Naive thymus-derived CD4-positive, alpha-beta T cell (primary cell): ENCODE measurements at regions of chr14 and their contacts with region 1.

Region 1: GRCh38 chr14:76947078-76947837 is 81.2 kb downstream of the IRF2BPL start:
- DNase-seq: peak; percentile 53 to 76 (median 68)
- ATAC-seq: peak; percentile 96
- H3K4me3 ChIP-seq: no peak overlapping the region
- H3K4me3 Mint-ChIP-seq: peak overlapping the region in 9 of 10 donors; percentile 20 to 65 (median 50)
- H3K27ac ChIP-seq: peak overlapping the region; percentile 20
- H3K27ac Mint-ChIP-seq: peak overlapping the region in 7 of 9 donors; percentile 28 to 83 (median 63)
- H3K4me1 ChIP-seq: peaks cover 6 to 16% of the 10 kb centered on the region in 2 donors
- H3K4me1 Mint-ChIP-seq: peaks cover 20 to 56% (median 35%) of the 10 kb centered on the region in 7 donors
- H3K27me3 ChIP-seq: no peaks in the 10 kb centered on the region
- H3K27me3 Mint-ChIP-seq: no peaks in the 10 kb centered on the region

Region 2: GRCh38 chr14:77033622-77034521 is 86.6 kb after region 1 on chr14:
- CTCF ChIA-PET with region 1: interaction called, 14 read pairs
- POLR2A ChIA-PET with region 1: interaction called, 76 read pairs
- intact Hi-C with region 1: no loop called
- DNase-seq: peak in 7 of 9 donors; percentile 32 to 89 (median 47)
- ATAC-seq: peak; percentile 76
- H3K4me3 ChIP-seq: peak overlapping the region; percentile 79
- H3K4me3 Mint-ChIP-seq: peak overlapping the region; percentile 81 to 93 (median 90)
- H3K27ac ChIP-seq: peak overlapping the region; percentile 95
- H3K27ac Mint-ChIP-seq: peak overlapping the region; percentile 92 to 98 (median 94)
- H3K4me1 ChIP-seq: peaks cover 37 to 67% of the 10 kb centered on the region in 2 donors
- H3K4me1 Mint-ChIP-seq: peaks cover 45 to 85% (median 78%) of the 10 kb centered on the region in 7 donors
- H3K27me3 ChIP-seq: no peaks in the 10 kb centered on the region
- H3K27me3 Mint-ChIP-seq: no peaks in the 10 kb centered on the region